ENCODE measurements at regions of chr18 and their contacts with region 1.

Region 1: GRCh38 chr18:57698571-57699276 is 77.1 kb upstream of the NARS1 start:
- DNase-seq: no peak
- H3K27ac ChIP-seq: no peak overlapping the region
- CTCF ChIP-seq: no peak

Region 2: GRCh38 chr18:57748770-57749603 is 50.3 kb after region 1 on chr18:
- CTCF ChIA-PET with region 1: no interaction called
- POLR2A ChIA-PET with region 1: interaction called, 17 read pairs
- DNase-seq: peak; percentile 42
- H3K27ac ChIP-seq: no peak overlapping the region
- CTCF ChIP-seq: no peak

Measured in RWPE1 (cell line).